ENCODE measurements at regions of chr4 and their contacts with region 1.

Region 1: GRCh38 chr4:61958591-61958990 is 758.5 kb downstream of the ADGRL3 start:
- DNase-seq: no peak
- ATAC-seq: no peak
- H3K4me3 Mint-ChIP-seq: no peak overlapping the region
- H3K27ac Mint-ChIP-seq: no peak overlapping the region
- H3K4me1 Mint-ChIP-seq: no peaks in the 10 kb centered on the region
- H3K27me3 Mint-ChIP-seq: no peaks in the 10 kb centered on the region

Region 2: GRCh38 chr4:62006108-62006507 is 47.5 kb after region 1 on chr4:
- CTCF ChIA-PET with region 1: no interaction called
- POLR2A ChIA-PET with region 1: no interaction called
- intact Hi-C with region 1: loop called in 1 of 2 experiments (anchors 5 kb)
- DNase-seq: no peak
- ATAC-seq: no peak
- H3K4me3 Mint-ChIP-seq: no peak overlapping the region
- H3K27ac Mint-ChIP-seq: no peak overlapping the region
- H3K4me1 Mint-ChIP-seq: no peaks in the 10 kb centered on the region
- H3K27me3 Mint-ChIP-seq: no peaks in the 10 kb centered on the region

Measured in activated CD4-positive, alpha-beta T cell treated with anti-CD3 and anti-CD28 coated beads for 36 hours (primary cell).